Activated T-helper 1 cell treated with anti-CD3 and anti-CD28 coated beads, Interleukin-12 subunit alpha, Interleukin-12 subunit beta, Interleukin-2, Interleukin-4 antibody, amounts not matched to agents 30 ng/mL and 10 ng/mL and 1 ng/mL, durations not matched to agents 14 hours and 24 hours and 36 hours (primary cell): ENCODE measurements at regions of chr16 and their contacts with region 1.

Region 1: GRCh38 chr16:13919683-13920509 is at the start of gene ERCC4:
- DNase-seq: peak; percentile 98
- H3K4me3 Mint-ChIP-seq: peak within 1 kb of the TSS; percentile 96
- H3K27ac Mint-ChIP-seq: peak within 1 kb of the TSS; percentile 85
- H3K4me1 Mint-ChIP-seq: peaks cover 29% of the 10 kb centered on the region
- H3K27me3 Mint-ChIP-seq: peaks cover 2% of the 10 kb centered on the region
- total RNA-seq, gene ERCC4: 15.9 and 18.6 TPM in 2 replicates

Region 2: DNA sequence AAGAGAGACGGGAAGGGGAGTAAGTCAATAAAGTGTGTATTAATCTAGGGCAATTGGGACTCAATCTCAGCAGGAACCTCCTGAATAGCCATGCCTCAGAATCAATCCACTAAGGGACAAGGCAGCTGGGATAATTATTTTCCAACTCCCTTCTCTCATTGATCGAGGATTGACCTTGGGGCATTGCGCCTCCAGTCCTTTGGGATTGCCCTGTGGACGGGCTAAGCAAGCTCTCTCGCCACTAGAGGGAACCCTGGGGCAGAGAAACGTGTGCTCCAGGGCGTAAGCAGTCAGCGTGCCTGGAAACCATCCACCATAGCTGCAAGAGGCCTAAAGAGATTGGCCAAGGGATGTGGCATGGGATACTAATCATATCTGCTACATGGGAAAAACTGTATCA is 53.8 kb before region 1 on chr16:
- intact Hi-C with region 1: loop called (anchors 1 kb)
- DNase-seq: peak; percentile 2
- H3K4me3 Mint-ChIP-seq: no peak overlapping the region
- H3K27ac Mint-ChIP-seq: no peak overlapping the region
- H3K4me1 Mint-ChIP-seq: no peaks in the 10 kb centered on the region
- H3K27me3 Mint-ChIP-seq: no peaks in the 10 kb centered on the region

Region 3: GRCh38 chr16:14193316-14193871 is 273.5 kb after region 1 on chr16:
- intact Hi-C with region 1: loop called (anchors 5 kb)
- DNase-seq: peak; percentile 31
- H3K4me3 Mint-ChIP-seq: peak overlapping the region; percentile 58
- H3K27ac Mint-ChIP-seq: peak overlapping the region; percentile 76
- H3K4me1 Mint-ChIP-seq: peaks cover 27% of the 10 kb centered on the region
- H3K27me3 Mint-ChIP-seq: no peaks in the 10 kb centered on the region

Region 4: GRCh38 chr16:14285513-14286385 is 365.9 kb after region 1 on chr16:
- intact Hi-C with region 1: loop called (anchors 1 kb)
- DNase-seq: peak; percentile 91
- H3K4me3 Mint-ChIP-seq: peak overlapping the region; percentile 89
- H3K27ac Mint-ChIP-seq: peak overlapping the region; percentile 77
- H3K4me1 Mint-ChIP-seq: peaks cover 20% of the 10 kb centered on the region
- H3K27me3 Mint-ChIP-seq: peaks cover 6% of the 10 kb centered on the region

Region 5: DNA sequence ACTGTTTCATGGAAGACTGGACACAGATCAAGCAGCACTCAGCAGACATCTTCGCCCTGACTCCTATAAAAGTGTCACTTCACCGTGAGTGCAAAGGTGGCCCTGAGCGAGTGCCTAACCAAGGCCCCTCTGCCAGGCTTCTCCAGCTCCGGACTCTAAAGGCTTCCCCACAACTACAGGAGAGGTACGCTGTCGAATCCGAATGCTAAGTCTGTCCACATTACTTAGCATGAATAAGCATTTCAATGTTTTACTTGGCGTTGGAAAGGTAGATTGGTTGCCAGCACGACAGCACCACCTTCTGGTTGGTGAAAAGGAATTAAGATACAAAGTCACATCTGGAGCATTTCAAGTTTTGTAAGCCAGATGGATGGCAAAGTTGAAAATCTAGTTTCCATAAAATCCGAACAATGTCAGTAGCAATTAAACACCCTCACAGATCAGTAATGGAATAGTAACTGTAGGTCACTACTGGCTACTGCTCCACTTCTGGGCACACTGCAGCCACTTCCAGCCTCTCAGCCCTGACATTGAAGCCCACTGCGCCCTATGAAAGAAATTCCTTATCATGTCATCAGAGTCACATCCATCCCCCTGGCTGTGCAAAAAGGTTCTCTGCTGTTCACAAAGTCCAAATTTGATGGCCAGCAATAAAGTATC is 609.2 kb after region 1 on chr16:
- intact Hi-C with region 1: loop called (anchors 1 kb)
- DNase-seq: peak; percentile 24
- H3K4me3 Mint-ChIP-seq: no peak overlapping the region
- H3K27ac Mint-ChIP-seq: no peak overlapping the region
- H3K4me1 Mint-ChIP-seq: peaks cover 5% of the 10 kb centered on the region
- H3K27me3 Mint-ChIP-seq: no peaks in the 10 kb centered on the region